Naive thymus-derived CD4-positive, alpha-beta T cell (primary cell): ENCODE measurements at regions of chr2 and their contacts with region 1.

Region 1: DNA sequence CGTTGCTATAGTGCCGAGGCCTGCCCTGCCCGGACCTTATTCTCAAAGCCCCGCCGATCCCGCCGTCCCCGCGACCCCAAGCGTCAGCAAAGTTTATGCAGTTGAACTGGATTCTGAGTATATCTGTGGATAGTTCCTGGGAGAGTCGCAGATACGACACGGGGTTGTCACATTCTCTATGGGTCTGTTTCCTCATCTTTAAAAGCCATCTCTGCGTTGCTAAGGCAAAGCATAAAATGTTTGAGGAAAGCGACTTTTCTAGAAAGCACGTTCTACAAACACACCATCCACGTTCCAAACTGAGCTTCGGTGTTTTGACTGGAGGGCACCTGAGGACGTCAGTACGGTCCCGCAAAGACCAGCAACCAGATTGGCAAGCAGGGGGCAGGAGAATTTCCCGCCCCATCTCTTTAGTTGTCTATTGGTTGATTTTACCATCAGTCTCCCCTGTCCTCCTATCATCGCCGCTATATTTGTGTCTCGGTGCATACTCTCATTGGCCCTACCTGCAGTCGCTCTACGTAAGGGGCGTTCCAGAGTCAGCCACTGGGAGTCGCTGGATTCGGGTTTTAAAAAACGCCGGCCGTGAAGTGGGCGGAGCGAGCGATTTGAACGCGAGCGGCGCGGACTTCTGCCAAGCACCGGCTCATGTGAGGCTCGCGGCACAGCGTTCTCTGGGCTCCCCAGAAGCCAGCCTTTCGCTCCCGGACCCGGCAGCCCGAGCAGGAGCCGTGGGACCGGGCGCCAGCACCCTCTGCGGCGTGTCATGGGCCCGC is at the start of gene CENPA:
- DNase-seq: peak; percentile 86 to 98 (median 96)
- ATAC-seq: peak; percentile 100
- H3K4me3 ChIP-seq: peak within 1 kb of the TSS; percentile 78
- H3K4me3 Mint-ChIP-seq: peak within 1 kb of the TSS; percentile 81 to 97 (median 88)
- H3K27ac ChIP-seq: peak within 1 kb of the TSS; percentile 60
- H3K27ac Mint-ChIP-seq: peak within 1 kb of the TSS; percentile 65 to 97 (median 89)
- H3K4me1 ChIP-seq: peaks cover 0 to 4% of the 10 kb centered on the region in 2 donors
- H3K4me1 Mint-ChIP-seq: peaks cover 10 to 34% (median 11%) of the 10 kb centered on the region in 7 donors
- H3K27me3 ChIP-seq: no peaks in the 10 kb centered on the region
- H3K27me3 Mint-ChIP-seq: peaks cover 0 to 26% (median 24%) of the 10 kb centered on the region in 5 donors
- total RNA-seq, gene CENPA: 0.37 to 25.6 (median 0.73) TPM in 3 of 5 experiments, not detected in the others

Region 2: GRCh38 chr2:25567406-25567805 is 1218.2 kb before region 1 on chr2:
- CTCF ChIA-PET with region 1: no interaction called
- POLR2A ChIA-PET with region 1: no interaction called
- intact Hi-C with region 1: no loop called
- DNase-seq: peak in 4 of 9 donors; percentile 6 to 27 (median 16)
- ATAC-seq: peak; percentile 67
- H3K4me3 ChIP-seq: no peak overlapping the region
- H3K4me3 Mint-ChIP-seq: no peak overlapping the region
- H3K27ac ChIP-seq: no peak overlapping the region
- H3K27ac Mint-ChIP-seq: peak overlapping the region in 1 of 9 donors; percentile 47
- H3K4me1 ChIP-seq: no peaks in the 10 kb centered on the region
- H3K4me1 Mint-ChIP-seq: peaks cover 0 to 14% (median 4%) of the 10 kb centered on the region in 7 donors
- H3K27me3 ChIP-seq: no peaks in the 10 kb centered on the region
- H3K27me3 Mint-ChIP-seq: no peaks in the 10 kb centered on the region

Region 3: GRCh38 chr2:26244309-26245121 is 541.1 kb before region 1 on chr2 and contains the starts of genes HADHA and HADHB:
- CTCF ChIA-PET with region 1: no interaction called
- POLR2A ChIA-PET with region 1: no interaction called
- intact Hi-C with region 1: loop called (anchors 1 to 5 kb)
- DNase-seq: peak; percentile 76 to 91 (median 87)
- ATAC-seq: peak; percentile 92
- H3K4me3 ChIP-seq: peak within 1 kb of the TSS; percentile 99
- H3K4me3 Mint-ChIP-seq: peak within 1 kb of the TSS; percentile 96 to 100 (median 99)
- H3K27ac ChIP-seq: peak within 1 kb of the TSS; percentile 96
- H3K27ac Mint-ChIP-seq: peak within 1 kb of the TSS; percentile 98 to 100 (median 99)
- H3K4me1 ChIP-seq: peaks cover 13 to 19% of the 10 kb centered on the region in 2 donors
- H3K4me1 Mint-ChIP-seq: peaks cover 47 to 73% (median 57%) of the 10 kb centered on the region in 7 donors
- H3K27me3 ChIP-seq: no peaks in the 10 kb centered on the region
- H3K27me3 Mint-ChIP-seq: no peaks in the 10 kb centered on the region
- total RNA-seq, gene HADHA: 83.8 to 111 (median 102) TPM
- total RNA-seq, gene HADHB: 38.1 to 77.5 (median 64.2) TPM

Region 4: DNA sequence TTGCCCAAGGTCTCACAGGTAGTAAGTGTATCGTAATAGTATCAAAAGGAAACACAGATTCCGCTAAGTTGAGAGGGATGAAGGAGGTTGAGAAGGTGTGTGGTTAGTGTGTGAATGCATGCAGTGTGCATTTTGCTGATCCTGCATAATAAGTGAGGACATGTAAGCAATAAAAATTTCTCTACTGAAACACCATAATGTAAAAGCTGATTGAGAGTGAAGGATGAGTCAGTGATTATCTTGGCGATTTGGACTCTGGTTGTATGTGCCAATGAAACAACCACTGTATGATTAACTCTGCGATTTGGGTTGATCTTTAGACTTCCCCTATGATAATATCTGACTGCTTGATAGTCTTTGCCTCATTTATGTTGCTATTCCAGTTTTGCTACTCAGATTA is 422.3 kb before region 1 on chr2:
- CTCF ChIA-PET with region 1: no interaction called
- POLR2A ChIA-PET with region 1: no interaction called
- intact Hi-C with region 1: no loop called
- DNase-seq: no peak
- ATAC-seq: peak; percentile 63
- H3K4me3 ChIP-seq: no peak overlapping the region
- H3K4me3 Mint-ChIP-seq: no peak overlapping the region
- H3K27ac ChIP-seq: no peak overlapping the region
- H3K27ac Mint-ChIP-seq: peak overlapping the region in 1 of 9 donors; percentile 45
- H3K4me1 ChIP-seq: peaks cover 0 to 5% of the 10 kb centered on the region in 2 donors
- H3K4me1 Mint-ChIP-seq: peaks cover 22 to 39% (median 32%) of the 10 kb centered on the region in 7 donors
- H3K27me3 ChIP-seq: no peaks in the 10 kb centered on the region
- H3K27me3 Mint-ChIP-seq: no peaks in the 10 kb centered on the region

Region 5: GRCh38 chr2:26772064-26773001 is 13.3 kb before region 1 on chr2:
- CTCF ChIA-PET with region 1: no interaction called
- POLR2A ChIA-PET with region 1: interaction called, 4 read pairs
- intact Hi-C with region 1: loop called (anchors 1 kb)
- DNase-seq: peak in 7 of 9 donors; percentile 46 to 76 (median 64)
- ATAC-seq: peak; percentile 63
- H3K4me3 ChIP-seq: no peak overlapping the region
- H3K4me3 Mint-ChIP-seq: peak overlapping the region; percentile 5 to 78 (median 42)
- H3K27ac ChIP-seq: peak overlapping the region; percentile 30
- H3K27ac Mint-ChIP-seq: peak overlapping the region; percentile 78 to 98 (median 93)
- H3K4me1 ChIP-seq: peaks cover 15 to 28% of the 10 kb centered on the region in 2 donors
- H3K4me1 Mint-ChIP-seq: peaks cover 33 to 63% (median 47%) of the 10 kb centered on the region in 7 donors
- H3K27me3 ChIP-seq: no peaks in the 10 kb centered on the region
- H3K27me3 Mint-ChIP-seq: no peaks in the 10 kb centered on the region

Region 6: DNA sequence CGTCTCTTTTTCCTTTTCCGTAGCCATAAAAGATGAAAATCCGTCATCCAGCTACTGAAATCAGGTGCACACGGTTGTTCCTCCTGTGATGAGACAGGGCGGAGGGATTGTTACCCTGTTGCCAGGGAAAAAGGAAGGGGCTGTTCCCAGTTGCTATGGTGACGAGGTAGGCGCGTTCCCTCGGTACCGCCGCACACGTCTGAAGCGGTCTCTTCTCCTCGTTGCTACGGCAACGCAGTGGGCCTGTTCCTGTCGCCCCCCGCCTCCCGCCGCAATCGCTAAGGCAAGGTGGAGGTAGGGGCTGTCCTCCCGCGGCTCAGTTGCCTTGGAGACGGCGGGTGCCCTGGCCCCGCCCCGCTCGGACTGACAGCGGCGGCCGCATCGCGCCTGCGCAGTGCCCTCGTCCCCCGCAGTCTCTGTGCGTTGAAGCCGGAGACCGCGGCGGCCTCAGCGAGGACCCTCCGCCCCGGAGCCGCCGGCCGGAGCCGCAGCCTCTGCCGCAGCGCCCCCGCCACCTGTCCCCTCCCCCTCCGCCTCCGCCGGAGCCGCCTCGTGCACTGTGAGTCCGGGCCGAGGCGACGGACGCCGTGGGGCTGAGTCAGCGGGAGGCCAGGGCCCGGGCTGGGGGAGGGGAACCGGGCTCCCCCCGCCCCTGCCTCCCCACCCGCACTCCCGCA is 184.8 kb after region 1 on chr2 and contains the start of gene MAPRE3:
- CTCF ChIA-PET with region 1: no interaction called
- POLR2A ChIA-PET with region 1: no interaction called
- intact Hi-C with region 1: loop called in 1 of 2 experiments (anchors 1 kb)
- DNase-seq: peak; percentile 71 to 93 (median 78)
- ATAC-seq: peak; percentile 93
- H3K4me3 ChIP-seq: peak within 1 kb of the TSS; percentile 89
- H3K4me3 Mint-ChIP-seq: peak within 1 kb of the TSS; percentile 83 to 97 (median 92)
- H3K27ac ChIP-seq: peak within 1 kb of the TSS; percentile 61
- H3K27ac Mint-ChIP-seq: peak within 1 kb of the TSS; percentile 56 to 96 (median 74)
- H3K4me1 ChIP-seq: peaks cover 0 to 12% of the 10 kb centered on the region in 2 donors
- H3K4me1 Mint-ChIP-seq: peaks cover 11 to 36% (median 25%) of the 10 kb centered on the region in 7 donors
- H3K27me3 ChIP-seq: no peaks in the 10 kb centered on the region
- H3K27me3 Mint-ChIP-seq: peaks cover 7 to 68% (median 13%) of the 10 kb centered on the region in 5 donors
- total RNA-seq, gene MAPRE3: 1.8 to 6.0 (median 4.5) TPM

Region 7: DNA sequence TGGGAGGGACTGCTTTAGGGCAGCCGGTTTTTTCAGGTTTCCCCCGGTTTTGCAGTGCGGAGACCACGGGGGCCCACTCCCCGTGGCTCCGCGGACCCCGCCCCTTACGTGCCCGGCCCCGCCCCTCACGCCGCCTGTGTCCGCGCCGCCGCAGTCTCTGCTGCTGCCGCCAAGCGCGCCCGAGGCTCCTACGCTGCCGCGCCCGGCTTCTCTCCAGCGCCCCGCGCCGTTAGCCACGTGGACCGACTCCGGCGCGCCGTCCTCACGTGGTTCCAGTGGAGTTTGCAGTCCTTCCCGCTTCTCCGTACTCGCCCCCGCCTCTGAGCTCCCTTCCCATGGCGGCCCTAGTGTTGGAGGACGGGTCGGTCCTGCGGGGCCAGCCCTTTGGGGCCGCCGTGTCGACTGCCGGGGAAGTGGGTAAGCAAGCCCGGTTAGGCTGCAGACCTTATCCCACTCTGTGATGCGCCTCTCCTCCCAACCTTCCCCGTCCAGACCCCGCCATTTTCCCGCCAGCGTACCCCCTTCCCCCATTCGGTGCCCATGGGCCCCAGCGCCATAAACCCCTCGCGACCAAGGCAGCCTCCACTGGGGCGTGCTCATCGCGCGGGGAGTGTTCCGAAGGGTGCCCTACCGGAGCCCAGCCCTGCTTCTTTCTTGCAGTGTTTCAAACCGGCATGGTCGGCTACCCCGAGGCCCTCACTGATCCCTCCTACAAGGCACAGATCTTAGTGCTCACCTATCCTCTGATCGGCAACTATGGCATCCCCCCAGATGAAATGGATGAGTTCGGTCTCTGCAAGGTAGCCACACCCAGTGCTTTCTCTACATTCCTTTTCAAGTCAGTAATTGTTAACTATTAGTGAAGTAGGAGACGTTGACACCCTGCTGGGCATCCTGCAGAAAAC is 431.9 kb after region 1 on chr2 and contains the start of gene CAD:
- CTCF ChIA-PET with region 1: no interaction called
- POLR2A ChIA-PET with region 1: no interaction called
- intact Hi-C with region 1: loop called (anchors 1 to 5 kb)
- DNase-seq: peak; percentile 71 to 90 (median 80)
- ATAC-seq: peak; percentile 87
- H3K4me3 ChIP-seq: peak within 1 kb of the TSS; percentile 68
- H3K4me3 Mint-ChIP-seq: peak within 1 kb of the TSS; percentile 90 to 98 (median 96)
- H3K27ac ChIP-seq: peak within 1 kb of the TSS; percentile 85
- H3K27ac Mint-ChIP-seq: peak within 1 kb of the TSS; percentile 86 to 96 (median 94)
- H3K4me1 ChIP-seq: peaks cover 19 to 24% of the 10 kb centered on the region in 2 donors
- H3K4me1 Mint-ChIP-seq: peaks cover 26 to 52% (median 45%) of the 10 kb centered on the region in 7 donors
- H3K27me3 ChIP-seq: no peaks in the 10 kb centered on the region
- H3K27me3 Mint-ChIP-seq: no peaks in the 10 kb centered on the region
- total RNA-seq, gene CAD: 34.4 to 65.7 (median 45.4) TPM